ENCODE measurements at regions of chr17 and their contacts with region 1.

Region 1: DNA sequence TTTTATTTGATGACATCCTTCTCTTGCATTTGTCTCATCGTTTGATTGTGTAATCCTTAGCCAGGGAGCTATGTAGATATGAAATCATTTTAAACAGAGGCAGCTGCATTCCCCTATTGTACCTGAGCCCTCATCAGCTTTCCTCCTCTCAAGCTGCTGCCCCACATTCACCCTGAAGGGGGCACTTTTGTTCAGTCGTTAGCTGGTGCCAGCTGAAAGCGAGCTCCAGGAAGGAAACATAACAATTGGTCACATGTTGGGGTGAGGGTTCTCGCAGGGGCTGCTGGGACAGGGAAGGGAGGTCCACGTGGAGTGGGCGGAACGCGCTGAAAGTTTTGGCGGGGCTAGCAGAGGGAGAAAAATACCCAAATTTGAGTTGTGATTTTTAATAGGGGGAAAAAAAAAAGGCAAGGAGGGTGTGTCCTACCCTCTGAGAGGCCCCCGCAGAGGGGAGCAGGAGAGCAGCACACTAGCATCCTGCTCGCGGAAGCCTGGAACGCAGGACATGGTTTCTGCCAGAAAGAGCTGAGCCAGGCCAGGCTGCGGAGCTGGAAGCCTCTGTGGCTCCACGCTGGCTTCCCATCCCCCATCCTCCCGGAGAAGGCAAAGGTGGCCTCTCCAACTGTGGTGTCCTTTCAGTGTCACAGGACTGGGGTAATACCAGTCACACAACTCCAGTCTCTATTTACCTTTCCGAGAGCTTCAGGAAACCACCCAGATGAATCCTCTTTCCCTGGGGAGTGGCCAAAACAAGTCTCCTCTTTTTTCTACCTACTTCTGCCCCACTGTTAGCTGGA is 8.5 kb upstream of the MSL1 start:
- DNase-seq: peak; percentile 96 to 97
- H3K4me3 ChIP-seq: peak overlapping the region; percentile 41 to 54
- H3K27ac ChIP-seq: peak overlapping the region; percentile 94 to 98
- H3K4me1 ChIP-seq: peaks cover 11 to 69% (median 65%) of the 10 kb centered on the region in 4 donors
- H3K27me3 ChIP-seq: no peaks in the 10 kb centered on the region
- CTCF ChIP-seq: peak; percentile 75 to 96

Region 2: GRCh38 chr17:40062329-40063186 is 50.8 kb before region 1 on chr17 and contains the start of gene THRA:
- intact Hi-C with region 1: loop called (anchors 5 kb)
- DNase-seq: peak; percentile 65 to 86
- H3K4me3 ChIP-seq: peak within 1 kb of the TSS; percentile 76 to 86
- H3K27ac ChIP-seq: peak within 1 kb of the TSS; percentile 93 to 94
- H3K4me1 ChIP-seq: peaks cover 0 to 55% (median 39%) of the 10 kb centered on the region in 4 donors
- H3K27me3 ChIP-seq: no peaks in the 10 kb centered on the region
- CTCF ChIP-seq: no peak

Region 3: GRCh38 chr17:40069751-40070708 is 43.3 kb before region 1 on chr17:
- intact Hi-C with region 1: loop called (anchors 5 kb)
- DNase-seq: no peak
- H3K4me3 ChIP-seq: peak overlapping the region; percentile 40 to 47
- H3K27ac ChIP-seq: peak overlapping the region; percentile 93 to 94
- H3K4me1 ChIP-seq: peaks cover 6 to 97% (median 93%) of the 10 kb centered on the region in 4 donors
- H3K27me3 ChIP-seq: no peaks in the 10 kb centered on the region
- CTCF ChIP-seq: no peak

Region 4: DNA sequence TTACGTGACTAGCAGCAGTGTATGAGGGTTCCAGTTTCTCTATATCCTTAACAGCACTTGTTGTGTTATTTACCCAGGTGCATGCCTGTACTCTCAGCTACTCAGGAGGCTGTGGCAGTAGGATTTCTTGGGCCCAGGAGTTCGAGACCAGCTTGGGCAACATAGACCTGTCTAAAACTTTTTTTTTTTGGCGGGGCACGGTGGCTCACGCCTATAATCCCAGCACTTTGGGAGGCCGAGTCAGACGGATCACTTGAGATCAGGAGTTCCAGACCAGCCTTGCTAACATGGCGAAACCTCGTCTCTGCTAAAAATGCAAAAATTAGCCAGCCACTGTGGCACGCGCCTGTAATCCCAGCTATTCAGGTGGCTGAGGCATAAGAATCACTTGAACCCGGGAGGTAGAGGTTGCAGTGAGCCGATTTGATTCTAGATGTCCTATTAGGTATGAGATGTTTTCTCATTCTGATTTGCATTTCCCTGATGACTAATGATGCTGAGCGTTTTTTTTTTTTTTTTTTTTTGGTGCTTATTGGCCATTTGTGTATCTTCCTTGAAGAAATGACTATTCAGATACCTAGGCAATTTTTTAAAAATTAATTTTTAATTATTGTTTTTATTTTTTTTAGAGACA is 40.4 kb after region 1 on chr17:
- intact Hi-C with region 1: no loop called
- DNase-seq: no peak
- H3K4me3 ChIP-seq: no peak overlapping the region
- H3K27ac ChIP-seq: no peak overlapping the region
- H3K4me1 ChIP-seq: peaks cover 0 to 40% (median 8%) of the 10 kb centered on the region in 4 donors
- H3K27me3 ChIP-seq: no peaks in the 10 kb centered on the region
- CTCF ChIP-seq: no peak

Region 5: GRCh38 chr17:40168262-40168832 is 55.0 kb after region 1 on chr17:
- intact Hi-C with region 1: loop called (anchors 5 kb)
- DNase-seq: no peak
- H3K4me3 ChIP-seq: no peak overlapping the region
- H3K27ac ChIP-seq: peak overlapping the region; percentile 33 to 59
- H3K4me1 ChIP-seq: peaks cover 0 to 7% (median 3%) of the 10 kb centered on the region in 4 donors
- H3K27me3 ChIP-seq: no peaks in the 10 kb centered on the region
- CTCF ChIP-seq: peak; percentile 86 to 91